GM12878 (cell line): ENCODE measurements at regions of chr3 and their contacts with region 1.

Region 1: DNA sequence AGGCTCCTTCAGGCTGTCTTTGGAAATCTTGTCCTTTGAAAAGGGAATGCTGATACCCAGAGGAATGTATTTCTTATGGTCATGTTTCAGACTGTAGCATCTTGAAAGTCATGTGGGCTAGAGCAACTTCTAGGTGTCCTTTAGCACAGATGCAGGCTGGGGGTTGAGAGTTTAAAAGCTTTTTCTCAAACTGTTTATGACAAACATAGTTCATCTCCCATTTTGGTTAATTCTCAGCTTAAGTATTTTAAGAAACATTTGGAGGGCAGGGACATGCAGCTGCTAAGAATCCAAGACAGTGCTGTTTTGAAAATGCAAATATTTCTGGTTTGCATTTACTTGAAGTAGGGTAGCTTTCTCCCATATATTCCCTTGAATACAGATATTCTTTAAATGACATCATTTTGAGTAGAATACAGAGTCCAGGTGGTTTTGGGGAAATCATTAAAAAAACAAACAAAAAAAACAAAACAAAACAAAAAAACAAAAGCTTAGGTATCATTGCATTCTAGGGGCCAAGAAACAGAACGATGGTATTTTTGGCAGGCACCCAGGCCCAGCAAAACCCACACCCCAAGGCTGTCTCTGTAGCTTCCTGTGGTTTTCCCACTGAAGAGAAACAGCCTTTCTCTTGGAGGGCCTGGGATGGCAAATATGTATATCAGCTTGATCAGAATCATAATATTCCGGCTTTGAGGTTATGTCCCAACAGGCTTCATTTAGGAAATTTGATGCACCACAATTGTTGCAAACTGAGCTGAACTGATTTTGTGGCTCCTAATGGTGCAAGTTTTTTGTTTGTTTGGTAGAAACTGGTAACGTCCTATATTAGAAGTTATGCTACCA is 120.0 kb downstream of the ATG7 start:
- DNase-seq: no peak
- ATAC-seq: no peak
- H3K4me3 ChIP-seq: no peak overlapping the region
- H3K27ac ChIP-seq: no peak overlapping the region
- H3K4me1 ChIP-seq: no peaks in the 10 kb centered on the region; the same call in 1 of the 2 replicates
- H3K27me3 ChIP-seq: no peaks in the 10 kb centered on the region
- CTCF ChIP-seq: no peak
- EP300 ChIP-seq: no peak
- POLR2A ChIP-seq: no peak
- RAD21 ChIP-seq: no peak

Region 2: DNA sequence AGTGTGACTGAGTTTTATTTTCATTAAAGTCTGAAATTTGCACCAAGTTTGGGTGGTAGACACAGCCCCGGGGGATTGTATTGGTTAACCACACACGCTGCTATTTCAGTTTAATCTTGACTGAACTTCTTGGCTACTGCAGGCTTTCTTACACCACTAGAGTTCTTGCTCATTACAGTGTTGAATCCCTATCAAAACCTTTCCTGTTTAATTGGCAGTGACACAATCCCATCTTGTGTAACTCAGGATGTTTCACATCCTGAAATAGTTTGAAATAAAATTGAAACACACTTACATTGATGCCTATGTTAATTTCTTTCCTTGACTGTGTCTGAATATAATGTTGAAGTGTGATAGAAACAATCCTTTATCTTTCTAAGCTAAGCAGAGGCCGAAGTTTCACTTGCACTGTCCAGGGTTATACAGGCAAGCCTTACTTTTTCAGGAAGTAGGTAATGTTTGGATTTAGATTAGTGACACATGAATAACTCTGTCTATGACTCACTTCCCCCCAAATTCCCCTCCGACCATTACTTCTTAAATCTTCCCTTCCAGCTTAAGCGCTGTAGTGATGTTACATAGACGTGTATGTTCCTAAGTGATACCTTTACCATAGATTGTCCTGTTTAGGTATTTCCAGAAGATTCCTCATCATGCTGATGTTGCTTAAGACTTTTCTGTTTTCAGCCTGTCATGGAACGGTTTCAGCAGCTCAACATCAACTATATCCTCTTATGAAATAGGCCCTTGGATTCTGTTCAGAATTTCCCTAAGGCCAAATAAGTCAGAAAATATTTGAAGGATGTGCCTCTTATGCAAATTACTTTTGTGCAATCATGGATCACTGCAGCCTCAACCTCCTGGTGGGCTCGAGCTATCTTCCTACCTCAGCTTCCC is 103.2 kb before region 1 on chr3:
- CTCF ChIA-PET with region 1: no interaction called
- POLR2A ChIA-PET with region 1: no interaction called
- RAD21 ChIA-PET with region 1: no interaction called
- SMC1A ChIA-PET with region 1: no interaction called
- in situ Hi-C with region 1: no loop called
- intact Hi-C with region 1: no loop called
- DNase-seq: peak; percentile 71
- ATAC-seq: peak; percentile 85
- H3K4me3 ChIP-seq: peak overlapping the region; percentile 30; the same call in 1 of the 2 replicates
- H3K27ac ChIP-seq: peak overlapping the region; percentile 91
- H3K4me1 ChIP-seq: peaks cover 36% of the 10 kb centered on the region
- H3K27me3 ChIP-seq: no peaks in the 10 kb centered on the region
- CTCF ChIP-seq: 0 out of 6 replicates have a peak, but pooled peaks of 1 of the 3 experiments have one; percentile 3
- EP300 ChIP-seq: peak; percentile 50 to 57; a peak in 2 of 4 replicates
- POLR2A ChIP-seq: no peak
- RAD21 ChIP-seq: no peak

Region 3: GRCh38 chr3:11379233-11379823 is 12.9 kb before region 1 on chr3:
- CTCF ChIA-PET with region 1: interaction called, 7 read pairs
- POLR2A ChIA-PET with region 1: no interaction called
- RAD21 ChIA-PET with region 1: no interaction called
- SMC1A ChIA-PET with region 1: interaction called, 11 read pairs
- in situ Hi-C with region 1: no loop called
- intact Hi-C with region 1: no loop called
- DNase-seq: peak; percentile 13
- ATAC-seq: peak; percentile 49; the same call in 2 of the 3 replicates
- H3K4me3 ChIP-seq: no peak overlapping the region
- H3K27ac ChIP-seq: no peak overlapping the region
- H3K4me1 ChIP-seq: no peaks in the 10 kb centered on the region
- H3K27me3 ChIP-seq: no peaks in the 10 kb centered on the region
- CTCF ChIP-seq: peak; percentile 22 to 60 (median 44); a peak in 4 of 6 replicates
- EP300 ChIP-seq: no peak
- POLR2A ChIP-seq: no peak
- RAD21 ChIP-seq: peak; percentile 69

Region 4: DNA sequence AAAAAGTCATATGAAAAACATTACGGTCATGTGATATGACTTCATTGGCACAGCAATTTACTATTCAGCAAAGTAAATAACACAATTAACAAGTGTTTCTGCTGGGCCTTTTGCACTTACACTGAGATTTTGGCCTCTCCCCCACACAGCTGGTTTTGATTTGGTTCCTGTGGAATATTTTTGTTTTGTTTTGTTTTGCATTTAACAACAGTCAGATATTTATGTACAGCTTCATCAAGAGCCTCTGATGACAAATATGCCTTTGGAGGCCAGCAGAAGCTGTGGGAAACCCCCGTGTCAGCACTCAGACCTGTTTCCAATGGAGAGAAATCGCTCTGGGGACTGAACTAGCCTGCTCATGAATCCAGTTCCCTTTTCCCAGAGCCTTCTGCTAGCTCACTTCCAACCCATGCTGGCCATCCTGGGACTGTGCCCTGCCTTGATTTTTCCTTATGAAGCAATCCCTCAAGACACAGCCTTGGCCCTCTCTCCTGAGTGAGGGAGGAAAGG is 41.8 kb after region 1 on chr3:
- CTCF ChIA-PET with region 1: no interaction called
- POLR2A ChIA-PET with region 1: no interaction called
- RAD21 ChIA-PET with region 1: no interaction called
- SMC1A ChIA-PET with region 1: no interaction called
- in situ Hi-C with region 1: no loop called
- intact Hi-C with region 1: no loop called
- DNase-seq: no peak
- ATAC-seq: no peak
- H3K4me3 ChIP-seq: no peak overlapping the region
- H3K27ac ChIP-seq: no peak overlapping the region
- H3K4me1 ChIP-seq: no peaks in the 10 kb centered on the region
- H3K27me3 ChIP-seq: no peaks in the 10 kb centered on the region
- CTCF ChIP-seq: no peak
- EP300 ChIP-seq: no peak
- POLR2A ChIP-seq: no peak
- RAD21 ChIP-seq: no peak

Region 5: GRCh38 chr3:11558002-11558401 is 165.8 kb after region 1 on chr3:
- CTCF ChIA-PET with region 1: no interaction called
- POLR2A ChIA-PET with region 1: no interaction called
- RAD21 ChIA-PET with region 1: no interaction called
- SMC1A ChIA-PET with region 1: no interaction called
- in situ Hi-C with region 1: no loop called
- intact Hi-C with region 1: no loop called
- DNase-seq: no peak
- ATAC-seq: no peak
- H3K4me3 ChIP-seq: no peak overlapping the region
- H3K27ac ChIP-seq: no peak overlapping the region
- H3K4me1 ChIP-seq: no peaks in the 10 kb centered on the region
- H3K27me3 ChIP-seq: no peaks in the 10 kb centered on the region
- CTCF ChIP-seq: no peak
- EP300 ChIP-seq: no peak
- POLR2A ChIP-seq: no peak
- RAD21 ChIP-seq: no peak